Activated CD4-positive, alpha-beta T cell treated with anti-CD3 and anti-CD28 coated beads for 36 hours (primary cell): ENCODE measurements at regions of chr19 and their contacts with region 1.

Region 1: DNA sequence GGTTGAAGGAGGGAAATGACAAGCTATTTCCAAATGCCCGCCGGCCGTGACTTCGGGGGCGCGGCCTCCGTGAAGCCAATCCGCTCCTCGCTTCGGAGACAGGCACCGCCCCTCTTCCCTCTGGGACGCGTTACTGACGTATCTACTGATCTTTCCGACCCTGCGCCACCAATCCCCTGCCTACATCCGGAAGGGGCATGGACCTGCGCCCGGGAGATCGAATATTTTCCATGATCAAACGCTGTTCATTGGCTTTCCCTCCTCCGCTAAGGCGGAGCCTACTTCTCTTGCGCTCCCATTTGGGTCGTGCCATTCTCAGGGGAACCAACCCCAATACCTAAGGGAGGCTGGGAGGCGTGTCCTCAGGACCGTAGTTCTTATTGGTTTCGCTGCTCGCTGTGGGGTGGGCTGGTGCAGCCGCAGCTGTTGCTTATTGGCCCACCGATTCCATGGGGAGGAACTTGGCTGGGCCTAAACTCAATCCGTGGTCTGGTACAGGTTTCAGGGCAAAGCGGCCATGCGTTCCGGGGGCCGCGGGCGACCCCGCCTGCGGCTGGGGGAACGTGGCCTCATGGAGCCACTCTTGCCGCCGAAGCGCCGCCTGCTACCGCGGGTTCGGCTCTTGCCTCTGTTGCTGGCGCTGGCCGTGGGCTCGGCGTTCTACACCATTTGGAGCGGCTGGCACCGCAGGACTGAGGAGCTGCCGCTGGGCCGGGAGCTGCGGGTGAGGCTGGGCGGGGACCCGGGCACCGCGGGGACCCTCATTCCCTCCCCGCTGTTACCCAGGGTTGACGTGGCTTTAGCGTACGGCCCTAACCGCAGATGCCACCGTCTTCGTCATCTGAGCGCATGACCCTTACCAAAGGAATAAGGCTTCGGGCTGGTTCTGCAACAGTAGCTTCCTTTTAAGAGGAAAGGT is at the start of gene QPCTL:
- DNase-seq: peak; percentile 99
- ATAC-seq: peak; percentile 92
- H3K4me3 Mint-ChIP-seq: peak within 1 kb of the TSS; percentile 89
- H3K27ac Mint-ChIP-seq: peak within 1 kb of the TSS; percentile 97
- H3K4me1 Mint-ChIP-seq: peaks cover 21% of the 10 kb centered on the region
- H3K27me3 Mint-ChIP-seq: no peaks in the 10 kb centered on the region
- total RNA-seq, gene QPCTL: 17.3 to 18.7 TPM

Region 2: GRCh38 chr19:44954824-44955586 is 737.4 kb before region 1 on chr19 and contains the start of gene CLPTM1:
- CTCF ChIA-PET with region 1: no interaction called
- POLR2A ChIA-PET with region 1: no interaction called
- intact Hi-C with region 1: loop called in 1 of 2 experiments (anchors 2 kb)
- DNase-seq: peak; percentile 99
- ATAC-seq: peak; percentile 94
- H3K4me3 Mint-ChIP-seq: peak within 1 kb of the TSS; percentile 95
- H3K27ac Mint-ChIP-seq: peak within 1 kb of the TSS; percentile 100
- H3K4me1 Mint-ChIP-seq: peaks cover 39% of the 10 kb centered on the region
- H3K27me3 Mint-ChIP-seq: no peaks in the 10 kb centered on the region
- total RNA-seq, gene CLPTM1: 41.6 to 44.1 TPM

Region 3: DNA sequence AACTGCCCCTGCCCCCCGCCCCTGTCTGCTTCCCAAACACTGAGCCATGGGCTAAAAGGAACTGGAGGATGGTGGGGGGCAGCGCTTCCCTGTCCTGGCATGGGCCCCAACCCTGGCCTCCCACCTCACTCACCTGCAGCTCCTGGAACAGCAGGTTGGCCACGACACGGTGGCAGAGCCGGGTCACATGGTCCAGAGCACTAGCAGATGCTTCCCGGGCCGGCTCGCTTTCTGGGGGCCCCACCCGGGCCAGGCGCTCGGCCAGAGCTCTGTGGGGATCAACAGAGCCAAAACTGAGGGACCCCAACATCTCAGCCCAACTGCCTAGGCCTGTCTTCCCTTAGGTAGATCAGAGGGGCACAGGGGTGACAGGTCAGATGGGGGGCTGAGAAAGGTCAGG is 467.8 kb before region 1 on chr19:
- CTCF ChIA-PET with region 1: no interaction called
- POLR2A ChIA-PET with region 1: no interaction called
- intact Hi-C with region 1: no loop called
- DNase-seq: no peak
- ATAC-seq: no peak
- H3K4me3 Mint-ChIP-seq: no peak overlapping the region
- H3K27ac Mint-ChIP-seq: no peak overlapping the region
- H3K4me1 Mint-ChIP-seq: no peaks in the 10 kb centered on the region
- H3K27me3 Mint-ChIP-seq: peaks cover 13% of the 10 kb centered on the region

Region 4: DNA sequence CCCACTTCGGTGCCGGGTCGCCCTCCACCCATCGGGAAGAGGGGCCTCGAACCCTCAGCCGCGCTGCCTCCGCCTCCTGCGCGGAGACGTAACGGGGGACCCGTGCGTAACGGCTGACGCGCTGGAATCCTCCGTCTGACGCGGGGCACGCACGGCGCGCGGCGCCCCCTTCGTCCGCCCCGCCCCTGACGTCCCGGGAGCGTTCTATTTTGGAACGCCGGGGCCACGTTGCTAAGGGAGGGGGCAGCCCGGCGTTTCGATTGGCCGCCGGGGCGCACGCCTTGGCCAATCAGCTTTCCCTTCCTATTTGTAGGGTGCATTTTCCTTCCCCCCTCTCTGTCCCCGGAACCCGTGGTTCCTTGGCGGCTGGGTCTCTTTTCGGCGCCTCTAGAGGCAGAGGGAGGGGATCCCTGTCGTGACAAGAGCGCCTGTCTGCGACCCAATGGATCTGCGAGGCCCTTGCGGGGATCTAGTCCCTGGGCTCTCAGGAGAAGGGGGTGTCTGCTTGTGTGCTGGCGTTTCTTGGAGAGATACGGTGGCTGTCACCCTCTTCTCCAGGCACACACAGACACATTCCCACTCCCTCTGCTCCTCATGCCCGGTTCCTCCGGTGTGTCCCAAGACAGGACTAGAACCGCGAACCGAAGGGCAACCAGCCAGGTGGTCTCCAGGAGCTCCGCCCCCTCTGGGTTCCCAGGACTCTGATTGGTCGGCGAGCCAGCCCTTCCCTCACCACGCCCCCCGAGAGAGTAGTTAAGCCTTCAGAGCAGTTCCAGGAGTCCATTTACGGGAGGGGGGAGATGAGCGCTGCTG is 223.1 kb before region 1 on chr19:
- CTCF ChIA-PET with region 1: no interaction called
- POLR2A ChIA-PET with region 1: interaction called, 7 read pairs
- intact Hi-C with region 1: loop called in 1 of 2 experiments (anchors 1 kb)
- DNase-seq: peak; percentile 97
- ATAC-seq: peak; percentile 82
- H3K4me3 Mint-ChIP-seq: peak overlapping the region; percentile 78
- H3K27ac Mint-ChIP-seq: peak overlapping the region; percentile 86
- H3K4me1 Mint-ChIP-seq: peaks cover 29% of the 10 kb centered on the region
- H3K27me3 Mint-ChIP-seq: peaks cover 11% of the 10 kb centered on the region

Region 5: DNA sequence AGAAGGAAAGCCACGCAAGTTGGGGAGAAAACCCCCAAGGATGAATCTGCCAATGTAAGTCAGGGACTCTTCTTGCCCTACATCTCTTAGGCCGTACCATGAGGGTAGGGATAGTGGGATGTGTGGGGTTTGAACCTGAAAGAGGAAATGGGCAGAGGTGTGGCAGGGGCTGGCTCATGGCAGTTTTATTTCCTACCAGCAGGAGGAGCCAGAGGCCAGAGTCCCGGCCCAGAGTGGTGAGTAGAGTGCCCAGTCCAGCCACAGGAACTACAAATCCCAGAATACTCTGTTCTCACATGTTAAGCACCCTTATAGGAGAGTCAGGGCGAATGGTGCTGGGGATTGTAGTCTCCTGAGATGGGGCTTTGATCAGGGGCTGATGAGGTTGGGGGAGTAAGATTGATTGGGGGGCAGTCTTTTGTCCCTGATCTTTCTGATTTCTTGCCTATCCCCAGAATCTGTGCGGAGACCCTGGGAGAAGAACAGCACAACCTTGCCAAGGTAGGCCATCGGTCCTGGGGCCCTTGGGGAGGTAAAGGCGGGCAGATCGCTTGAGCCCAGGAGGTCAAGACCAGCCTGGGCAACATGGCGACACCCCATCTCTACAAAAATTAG is 168.7 kb before region 1 on chr19:
- CTCF ChIA-PET with region 1: interaction called, 3 read pairs
- POLR2A ChIA-PET with region 1: no interaction called
- intact Hi-C with region 1: loop called in 1 of 2 experiments (anchors 1 kb)
- DNase-seq: peak; percentile 84
- ATAC-seq: peak; percentile 99
- H3K4me3 Mint-ChIP-seq: no peak overlapping the region
- H3K27ac Mint-ChIP-seq: peak overlapping the region; percentile 19
- H3K4me1 Mint-ChIP-seq: peaks cover 14% of the 10 kb centered on the region
- H3K27me3 Mint-ChIP-seq: peaks cover 2% of the 10 kb centered on the region

Region 6: DNA sequence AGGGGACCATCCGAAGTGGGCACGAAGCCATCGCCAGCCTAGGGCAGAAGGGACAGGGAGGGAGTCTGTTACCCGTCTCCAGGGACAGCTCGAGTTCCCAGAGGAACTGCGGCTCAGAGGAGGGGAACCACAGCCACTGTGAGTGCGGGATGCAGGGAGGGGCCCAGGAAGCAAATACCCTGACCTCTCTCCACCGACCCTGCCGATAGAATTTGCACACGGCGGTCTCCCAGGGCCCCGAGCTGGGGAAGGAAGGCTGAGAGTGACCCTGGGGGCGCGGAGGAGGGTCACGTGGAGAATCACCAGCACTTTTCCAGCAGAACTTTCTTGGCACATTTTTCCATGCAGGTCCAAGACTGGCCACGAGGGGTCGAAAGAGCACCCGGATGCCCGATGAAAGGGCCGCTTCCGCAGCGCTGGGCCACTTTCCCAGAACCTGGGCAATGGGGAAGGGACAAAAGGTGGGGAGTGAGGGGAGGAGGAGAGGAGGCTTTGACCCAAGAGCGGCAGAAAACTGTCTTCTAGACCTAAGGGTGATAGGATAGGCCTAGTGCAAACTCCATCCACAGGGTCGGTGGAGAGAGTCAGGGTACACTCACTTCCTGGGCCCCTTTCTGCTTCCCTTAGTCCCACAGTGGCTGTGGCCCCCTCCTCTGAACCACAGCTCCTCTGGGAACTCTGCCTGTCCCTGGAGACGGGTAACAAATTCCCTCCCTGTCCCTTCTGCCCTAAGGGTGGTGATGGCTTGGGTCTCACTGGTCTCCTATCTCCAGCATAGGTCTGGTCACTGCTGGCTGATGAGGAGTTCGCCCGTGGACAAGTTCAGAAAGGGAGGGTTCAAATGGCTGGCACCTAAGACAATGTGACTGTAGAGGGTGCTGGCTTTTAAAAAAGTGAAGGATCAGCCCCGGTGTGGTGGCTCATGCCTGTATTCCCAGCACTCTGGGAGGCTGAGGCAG is 85.1 kb before region 1 on chr19:
- CTCF ChIA-PET with region 1: no interaction called
- POLR2A ChIA-PET with region 1: no interaction called
- intact Hi-C with region 1: no loop called
- DNase-seq: peak; percentile 68
- ATAC-seq: peak; percentile 64
- H3K4me3 Mint-ChIP-seq: no peak overlapping the region
- H3K27ac Mint-ChIP-seq: peak overlapping the region; percentile 77
- H3K4me1 Mint-ChIP-seq: peaks cover 16% of the 10 kb centered on the region
- H3K27me3 Mint-ChIP-seq: peaks cover 7% of the 10 kb centered on the region

Region 7: GRCh38 chr19:45621389-45621788 is 71.1 kb before region 1 on chr19:
- CTCF ChIA-PET with region 1: no interaction called
- POLR2A ChIA-PET with region 1: no interaction called
- intact Hi-C with region 1: no loop called
- DNase-seq: no peak
- ATAC-seq: no peak
- H3K4me3 Mint-ChIP-seq: no peak overlapping the region
- H3K27ac Mint-ChIP-seq: no peak overlapping the region
- H3K4me1 Mint-ChIP-seq: no peaks in the 10 kb centered on the region
- H3K27me3 Mint-ChIP-seq: no peaks in the 10 kb centered on the region

Region 8: GRCh38 chr19:45705115-45705514 is 12.7 kb after region 1 on chr19:
- CTCF ChIA-PET with region 1: interaction called, 16 read pairs
- POLR2A ChIA-PET with region 1: interaction called, 3 read pairs
- intact Hi-C with region 1: no loop called
- DNase-seq: no peak
- ATAC-seq: no peak
- H3K4me3 Mint-ChIP-seq: no peak overlapping the region
- H3K27ac Mint-ChIP-seq: no peak overlapping the region
- H3K4me1 Mint-ChIP-seq: no peaks in the 10 kb centered on the region
- H3K27me3 Mint-ChIP-seq: no peaks in the 10 kb centered on the region

Region 9: DNA sequence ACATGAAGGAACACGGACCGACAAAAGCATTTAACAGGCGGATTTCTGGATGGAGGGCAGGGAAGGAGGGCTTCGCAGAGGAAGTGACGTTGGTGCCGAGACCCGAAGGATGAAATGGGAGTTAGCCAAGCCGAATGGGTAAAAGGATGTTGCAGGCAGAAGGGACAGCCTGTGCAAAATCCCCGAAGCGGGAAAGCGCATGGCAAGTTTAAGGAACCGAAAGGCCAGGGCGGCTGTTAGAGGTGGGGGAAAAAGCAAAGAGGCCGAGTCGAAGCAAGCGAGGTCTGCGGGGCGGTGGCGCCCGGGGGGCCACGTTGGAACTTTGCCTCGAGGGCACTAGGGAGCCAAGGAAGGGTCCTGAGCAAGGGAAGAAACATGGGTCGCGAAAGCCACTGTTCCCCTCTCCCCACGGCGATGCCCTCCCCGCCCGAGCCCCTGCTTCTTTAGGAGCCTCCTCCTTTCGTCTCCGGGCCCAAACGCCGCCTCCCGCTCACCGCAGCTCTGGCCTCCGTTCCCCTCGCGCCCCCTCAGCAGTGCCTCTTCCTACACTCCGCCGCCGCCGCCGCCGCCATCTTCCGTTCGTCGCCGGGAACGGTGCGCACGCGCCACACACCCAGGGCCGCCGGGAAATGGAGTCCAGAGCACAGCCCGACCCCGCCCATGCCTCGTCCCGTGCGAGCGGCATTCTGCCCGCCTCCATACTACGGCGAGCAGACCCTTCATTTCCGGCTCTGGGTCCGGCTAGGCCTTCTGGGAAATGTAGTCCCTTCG is 170.3 kb after region 1 on chr19 and contains the start of gene SYMPK:
- CTCF ChIA-PET with region 1: interaction called, 3 read pairs
- POLR2A ChIA-PET with region 1: no interaction called
- intact Hi-C with region 1: loop called (anchors 1 kb)
- DNase-seq: peak; percentile 100
- ATAC-seq: peak; percentile 96
- H3K4me3 Mint-ChIP-seq: peak within 1 kb of the TSS; percentile 87
- H3K27ac Mint-ChIP-seq: peak within 1 kb of the TSS; percentile 95
- H3K4me1 Mint-ChIP-seq: peaks cover 31% of the 10 kb centered on the region
- H3K27me3 Mint-ChIP-seq: peaks cover 17% of the 10 kb centered on the region
- total RNA-seq, gene SYMPK: 108 to 128 TPM

Region 10: GRCh38 chr19:46076951-46077816 is 384.7 kb after region 1 on chr19:
- CTCF ChIA-PET with region 1: no interaction called
- POLR2A ChIA-PET with region 1: no interaction called
- intact Hi-C with region 1: no loop called
- DNase-seq: peak; percentile 67
- ATAC-seq: peak; percentile 63
- H3K4me3 Mint-ChIP-seq: no peak overlapping the region
- H3K27ac Mint-ChIP-seq: no peak overlapping the region
- H3K4me1 Mint-ChIP-seq: peaks cover 8% of the 10 kb centered on the region
- H3K27me3 Mint-ChIP-seq: peaks cover 73% of the 10 kb centered on the region